ENCODE measurements at regions of chr12 and their contacts with region 1.

Region 1: DNA sequence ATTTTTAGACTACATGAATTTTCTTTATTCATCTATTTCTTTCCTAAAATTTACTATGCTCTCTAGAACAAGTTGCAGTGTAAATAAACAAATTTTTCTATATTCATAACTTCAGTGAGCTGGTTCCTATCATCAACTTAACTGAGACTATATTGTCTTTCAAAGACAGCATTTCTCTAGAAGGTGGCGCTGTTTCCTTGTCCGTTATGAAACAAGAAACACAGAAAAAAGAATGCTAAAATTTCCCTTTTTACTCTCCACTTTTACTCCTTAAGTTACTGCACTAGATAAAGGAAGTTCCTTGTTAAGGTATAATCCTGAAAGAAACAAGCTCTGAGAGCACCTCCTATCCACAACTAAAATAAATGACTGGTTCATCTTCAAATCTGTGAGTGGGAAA is 8.2 kb upstream of the CLEC2A start:
- DNase-seq: no peak
- ATAC-seq: no peak
- H3K4me3 Mint-ChIP-seq: no peak overlapping the region
- H3K27ac Mint-ChIP-seq: no peak overlapping the region
- H3K4me1 Mint-ChIP-seq: peaks cover 18% of the 10 kb centered on the region
- H3K27me3 Mint-ChIP-seq: peaks cover 8% of the 10 kb centered on the region
- CTCF ChIP-seq: no peak

Region 2: GRCh38 chr12:9910716-9911421 is 29.5 kb before region 1 on chr12:
- CTCF ChIA-PET with region 1: no interaction called
- POLR2A ChIA-PET with region 1: no interaction called
- intact Hi-C with region 1: no loop called
- DNase-seq: no peak
- ATAC-seq: no peak
- H3K4me3 Mint-ChIP-seq: no peak overlapping the region
- H3K27ac Mint-ChIP-seq: no peak overlapping the region
- H3K4me1 Mint-ChIP-seq: peaks cover 5% of the 10 kb centered on the region
- H3K27me3 Mint-ChIP-seq: peaks cover 10% of the 10 kb centered on the region
- CTCF ChIP-seq: no peak

Region 3: GRCh38 chr12:9980126-9980525 is 39.8 kb after region 1 on chr12:
- CTCF ChIA-PET with region 1: no interaction called
- POLR2A ChIA-PET with region 1: no interaction called
- intact Hi-C with region 1: no loop called
- DNase-seq: no peak
- ATAC-seq: no peak
- H3K4me3 Mint-ChIP-seq: no peak overlapping the region
- H3K27ac Mint-ChIP-seq: no peak overlapping the region
- H3K4me1 Mint-ChIP-seq: no peaks in the 10 kb centered on the region
- H3K27me3 Mint-ChIP-seq: peaks cover 24% of the 10 kb centered on the region
- CTCF ChIP-seq: no peak

Region 4: GRCh38 chr12:10001171-10001776 is 60.9 kb after region 1 on chr12:
- CTCF ChIA-PET with region 1: no interaction called
- POLR2A ChIA-PET with region 1: no interaction called
- intact Hi-C with region 1: no loop called
- DNase-seq: no peak
- ATAC-seq: no peak
- H3K4me3 Mint-ChIP-seq: no peak overlapping the region
- H3K27ac Mint-ChIP-seq: no peak overlapping the region
- H3K4me1 Mint-ChIP-seq: no peaks in the 10 kb centered on the region
- H3K27me3 Mint-ChIP-seq: peaks cover 24% of the 10 kb centered on the region
- CTCF ChIP-seq: no peak

Region 5: GRCh38 chr12:10012630-10013330 is 72.4 kb after region 1 on chr12:
- CTCF ChIA-PET with region 1: interaction called, 14 read pairs
- POLR2A ChIA-PET with region 1: no interaction called
- intact Hi-C with region 1: loop called (anchors 5 kb)
- DNase-seq: no peak
- ATAC-seq: no peak
- H3K4me3 Mint-ChIP-seq: no peak overlapping the region
- H3K27ac Mint-ChIP-seq: no peak overlapping the region
- H3K4me1 Mint-ChIP-seq: no peaks in the 10 kb centered on the region
- H3K27me3 Mint-ChIP-seq: peaks cover 34% of the 10 kb centered on the region
- CTCF ChIP-seq: no peak

Region 6: DNA sequence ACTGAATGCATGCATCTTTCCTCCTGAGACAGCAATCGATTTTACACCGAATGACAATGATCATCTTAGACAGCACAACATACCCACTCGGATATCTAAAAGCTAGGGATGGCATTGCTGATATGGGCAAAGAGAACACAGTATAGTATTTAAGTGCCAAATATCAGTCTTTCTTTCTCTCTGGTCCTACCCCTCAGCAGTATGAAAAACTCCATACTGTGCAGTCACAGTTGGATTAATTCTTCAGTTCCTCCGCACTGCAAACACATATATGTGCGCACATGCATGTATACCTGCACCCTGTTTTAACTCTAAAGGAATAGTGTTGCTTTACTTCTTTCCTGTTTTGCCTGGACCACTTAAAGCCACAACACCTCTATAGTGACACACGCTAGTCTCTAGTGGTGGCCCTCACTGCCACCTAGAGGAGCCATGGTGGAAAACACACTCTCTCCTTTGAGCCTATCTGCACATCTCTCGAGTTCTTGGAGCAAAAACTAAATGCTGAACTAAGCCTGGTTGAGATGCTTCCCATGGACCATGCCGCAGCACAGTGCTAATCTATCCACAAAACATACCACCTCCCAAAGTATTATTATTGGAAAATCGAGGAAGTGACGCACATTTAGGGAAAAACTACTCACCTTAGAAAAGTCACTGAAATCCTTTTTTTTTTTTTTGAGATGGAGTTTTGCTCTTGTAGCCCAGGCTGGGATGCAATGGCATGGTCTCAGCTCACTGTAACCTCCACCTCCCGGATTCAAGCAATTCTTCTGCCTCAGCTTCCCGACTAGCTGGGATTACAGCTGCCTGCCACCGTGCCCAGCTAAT is 250.4 kb after region 1 on chr12:
- CTCF ChIA-PET with region 1: interaction called, 4 read pairs
- POLR2A ChIA-PET with region 1: no interaction called
- intact Hi-C with region 1: loop called (anchors 1 kb)
- DNase-seq: no peak
- ATAC-seq: peak; percentile 94
- H3K4me3 Mint-ChIP-seq: no peak overlapping the region
- H3K27ac Mint-ChIP-seq: no peak overlapping the region
- H3K4me1 Mint-ChIP-seq: peaks cover 8% of the 10 kb centered on the region
- H3K27me3 Mint-ChIP-seq: peaks cover 51% of the 10 kb centered on the region
- CTCF ChIP-seq: peak; percentile 22

Measured in activated B cell treated with CpG ODN at 0.5 μM for 24 hours (primary cell).